ENCODE measurements at regions of chr2 and their contacts with region 1.

Region 1: DNA sequence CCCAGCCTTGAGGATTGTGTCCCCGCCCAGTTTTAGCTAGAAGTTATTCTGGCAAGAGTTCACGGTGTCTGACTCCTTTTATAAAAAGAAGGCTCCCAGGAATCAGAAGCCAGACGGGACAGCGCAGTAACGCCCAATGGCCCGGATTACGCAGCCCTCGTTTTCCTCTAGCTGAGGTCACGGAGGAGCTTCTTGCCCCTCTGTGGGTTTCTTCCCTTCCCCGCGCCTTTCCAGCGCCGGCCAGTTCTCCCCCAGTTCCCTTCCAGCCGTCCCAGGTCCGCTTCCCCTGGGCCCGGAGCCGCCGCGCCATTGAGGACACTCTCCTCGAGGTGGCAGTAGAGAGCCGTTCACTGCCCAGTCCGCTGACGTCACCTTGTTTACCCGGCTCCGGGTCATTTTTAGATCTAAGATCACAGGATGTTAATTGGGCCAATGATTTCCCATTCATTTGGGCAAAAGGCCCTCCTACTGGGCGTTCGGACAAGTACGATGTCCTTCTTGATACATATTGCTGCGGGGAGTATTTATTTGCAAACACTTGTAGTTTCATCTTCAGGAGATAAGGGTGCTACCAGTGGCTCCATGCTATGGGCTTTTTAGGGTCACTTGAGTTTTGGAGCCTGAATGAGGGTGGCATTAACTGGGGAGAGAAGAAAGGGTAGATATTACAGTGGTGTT is 81.5 kb upstream of the PPM1B start:
- DNase-seq: peak; percentile 87
- ATAC-seq: peak; percentile 97
- H3K4me3 ChIP-seq: peak overlapping the region; percentile 43 to 70 (median 57)
- H3K4me3 Mint-ChIP-seq: peak overlapping the region; percentile 66
- H3K27ac ChIP-seq: peak overlapping the region; percentile 44 to 71
- H3K27ac Mint-ChIP-seq: peak overlapping the region; percentile 54
- H3K4me1 ChIP-seq: peaks cover 24 to 32% of the 10 kb centered on the region in 2 donors
- H3K4me1 Mint-ChIP-seq: peaks cover 23% of the 10 kb centered on the region
- H3K27me3 ChIP-seq: no peaks in the 10 kb centered on the region
- H3K27me3 Mint-ChIP-seq: no peaks in the 10 kb centered on the region
- CTCF ChIP-seq: peak; percentile 97

Region 2: GRCh38 chr2:42342061-42342794 is 1744.9 kb before region 1 on chr2:
- CTCF ChIA-PET with region 1: no interaction called
- POLR2A ChIA-PET with region 1: no interaction called
- intact Hi-C with region 1: no loop called
- DNase-seq: no peak
- ATAC-seq: no peak
- H3K4me3 ChIP-seq: no peak overlapping the region
- H3K4me3 Mint-ChIP-seq: no peak overlapping the region
- H3K27ac ChIP-seq: no peak overlapping the region
- H3K27ac Mint-ChIP-seq: peak overlapping the region; percentile 47
- H3K4me1 ChIP-seq: no peaks in the 10 kb centered on the region
- H3K4me1 Mint-ChIP-seq: no peaks in the 10 kb centered on the region
- H3K27me3 ChIP-seq: no peaks in the 10 kb centered on the region
- H3K27me3 Mint-ChIP-seq: no peaks in the 10 kb centered on the region
- CTCF ChIP-seq: no peak

Region 3: GRCh38 chr2:43718530-43719124 is 368.5 kb before region 1 on chr2:
- CTCF ChIA-PET with region 1: no interaction called
- POLR2A ChIA-PET with region 1: no interaction called
- intact Hi-C with region 1: no loop called
- DNase-seq: no peak
- ATAC-seq: no peak
- H3K4me3 ChIP-seq: no peak overlapping the region
- H3K4me3 Mint-ChIP-seq: no peak overlapping the region
- H3K27ac ChIP-seq: no peak overlapping the region
- H3K27ac Mint-ChIP-seq: no peak overlapping the region
- H3K4me1 ChIP-seq: no peaks in the 10 kb centered on the region
- H3K4me1 Mint-ChIP-seq: peaks cover 6% of the 10 kb centered on the region
- H3K27me3 ChIP-seq: no peaks in the 10 kb centered on the region
- H3K27me3 Mint-ChIP-seq: peaks cover 5% of the 10 kb centered on the region
- CTCF ChIP-seq: no peak

Region 4: DNA sequence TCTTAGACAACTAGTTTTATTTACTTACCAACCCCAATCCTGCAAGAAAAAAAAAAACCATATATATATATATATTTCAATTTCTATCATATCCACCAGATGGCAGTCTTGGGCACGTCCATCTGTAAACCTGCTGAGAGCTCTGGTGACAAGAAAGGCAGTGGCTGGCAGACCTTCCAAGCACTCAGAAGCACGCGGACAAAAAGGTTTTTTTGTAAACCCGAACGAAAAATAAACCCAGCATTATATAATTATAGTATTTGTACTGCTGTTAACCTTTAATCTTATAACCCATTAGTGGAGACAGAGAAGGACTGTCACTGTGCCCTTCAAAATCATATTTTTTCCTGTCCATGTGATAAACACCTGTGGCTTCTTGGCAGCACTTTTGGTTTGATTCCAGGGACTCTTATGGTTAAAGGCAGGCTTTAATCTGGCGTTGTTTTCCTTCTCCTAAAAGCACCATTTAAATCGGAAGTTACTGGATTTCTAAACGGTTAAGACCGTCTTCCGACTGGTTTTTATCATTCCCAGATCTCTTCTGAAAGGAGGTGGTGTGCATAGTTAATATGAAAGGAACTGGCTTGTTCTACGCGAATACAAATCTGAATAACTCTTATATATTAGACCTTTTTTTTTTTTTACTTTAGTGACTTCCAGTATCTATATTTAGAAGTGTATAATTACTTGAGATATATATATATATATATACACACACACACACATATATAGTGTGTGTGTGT is 157.1 kb after region 1 on chr2:
- CTCF ChIA-PET with region 1: interaction called, 3 read pairs
- POLR2A ChIA-PET with region 1: no interaction called
- intact Hi-C with region 1: loop called (anchors 2 kb)
- DNase-seq: peak; percentile 76
- ATAC-seq: peak; percentile 80
- H3K4me3 ChIP-seq: peak overlapping the region in 3 of 5 experiments; percentile 22 to 52 (median 24)
- H3K4me3 Mint-ChIP-seq: peak overlapping the region; percentile 82
- H3K27ac ChIP-seq: no peak overlapping the region
- H3K27ac Mint-ChIP-seq: peak overlapping the region; percentile 8
- H3K4me1 ChIP-seq: peaks cover 5 to 7% of the 10 kb centered on the region in 2 donors
- H3K4me1 Mint-ChIP-seq: peaks cover 15% of the 10 kb centered on the region
- H3K27me3 ChIP-seq: no peaks in the 10 kb centered on the region
- H3K27me3 Mint-ChIP-seq: no peaks in the 10 kb centered on the region
- CTCF ChIP-seq: peak; percentile 88

Region 5: DNA sequence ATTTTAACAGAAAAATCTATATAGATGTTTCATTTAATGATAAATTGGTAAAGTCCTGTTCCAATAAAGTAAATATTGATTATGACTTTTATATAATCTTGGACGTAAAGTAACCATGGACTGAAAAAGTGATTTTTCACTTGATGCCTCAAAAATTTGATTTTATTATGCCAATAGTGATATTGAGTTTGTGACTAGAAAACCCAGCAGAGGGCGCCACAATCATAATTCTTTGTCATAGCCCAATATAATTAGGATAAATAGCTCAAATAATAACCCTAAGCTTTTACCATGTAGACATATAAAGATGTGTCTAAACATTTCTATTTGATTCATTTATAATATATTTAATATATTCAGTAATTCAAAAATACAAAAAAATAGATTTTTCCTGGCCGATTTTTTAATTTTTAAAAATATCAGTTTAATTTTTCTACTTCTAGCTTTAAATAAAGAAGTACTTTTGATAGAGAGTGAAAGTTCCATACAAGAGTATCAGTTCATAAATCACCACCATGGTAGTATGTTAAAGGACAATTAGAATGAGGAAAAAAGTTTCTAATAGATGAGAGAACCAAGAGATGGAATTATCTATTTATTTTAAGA is 305.3 kb after region 1 on chr2:
- CTCF ChIA-PET with region 1: interaction called, 5 read pairs
- POLR2A ChIA-PET with region 1: no interaction called
- intact Hi-C with region 1: loop called (anchors 2 kb)
- DNase-seq: peak; percentile 59
- ATAC-seq: no peak
- H3K4me3 ChIP-seq: no peak overlapping the region
- H3K4me3 Mint-ChIP-seq: no peak overlapping the region
- H3K27ac ChIP-seq: no peak overlapping the region
- H3K27ac Mint-ChIP-seq: no peak overlapping the region
- H3K4me1 ChIP-seq: no peaks in the 10 kb centered on the region
- H3K4me1 Mint-ChIP-seq: peaks cover 3% of the 10 kb centered on the region
- H3K27me3 ChIP-seq: no peaks in the 10 kb centered on the region
- H3K27me3 Mint-ChIP-seq: no peaks in the 10 kb centered on the region
- CTCF ChIP-seq: peak; percentile 84